ENCODE measurements at regions of chr2 and their contacts with region 1.

Region 1: DNA sequence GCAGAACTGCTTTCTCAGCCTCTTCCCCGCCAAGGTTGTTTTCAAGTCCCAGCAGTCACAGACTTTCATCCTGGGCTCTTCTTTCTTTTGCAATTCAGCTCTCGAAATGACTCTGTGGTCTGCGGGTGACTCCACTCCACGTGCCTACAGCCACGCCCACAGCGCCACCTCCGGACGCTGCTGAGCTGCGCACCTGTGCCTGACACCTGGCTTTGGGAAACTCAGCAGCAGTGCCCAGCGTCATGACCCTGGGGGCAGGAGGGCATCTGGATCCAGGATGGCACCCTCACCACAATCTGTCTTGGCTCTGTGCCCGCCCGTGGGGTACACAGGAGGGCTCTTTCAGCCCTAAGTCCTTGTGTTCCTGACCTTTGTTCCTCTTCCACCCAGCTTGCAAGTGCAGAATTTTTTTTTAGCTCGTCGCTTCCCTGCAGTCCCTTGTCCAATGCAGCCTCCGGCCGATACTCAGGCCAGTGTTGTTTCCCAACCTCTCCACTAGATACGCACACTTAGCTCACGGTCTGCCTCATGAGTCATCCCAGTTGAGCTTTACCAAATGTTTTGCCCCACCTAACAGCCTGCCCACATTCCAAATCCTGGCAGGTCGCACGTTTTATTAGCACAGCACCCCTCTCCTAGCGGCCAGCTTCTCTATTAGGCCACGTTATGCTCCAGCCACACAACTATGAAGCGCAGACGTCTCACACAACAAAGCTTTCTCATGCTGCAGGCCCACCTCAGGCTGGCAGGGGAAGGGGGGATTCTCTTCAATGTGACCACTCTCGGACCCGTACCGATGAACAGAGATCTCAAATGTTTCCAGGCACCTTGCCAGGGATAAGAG is 6.5 kb upstream of the CAPN10 start:
- DNase-seq: peak; percentile 84
- H3K4me3 Mint-ChIP-seq: peak overlapping the region; percentile 59
- H3K27ac Mint-ChIP-seq: peak overlapping the region; percentile 91
- H3K4me1 Mint-ChIP-seq: peaks cover 45% of the 10 kb centered on the region
- H3K27me3 Mint-ChIP-seq: no peaks in the 10 kb centered on the region
- CTCF ChIP-seq: peak; percentile 73

Region 2: GRCh38 chr2:240348522-240348921 is 231.5 kb before region 1 on chr2:
- CTCF ChIA-PET with region 1: no interaction called
- intact Hi-C with region 1: no loop called
- DNase-seq: no peak
- H3K4me3 Mint-ChIP-seq: no peak overlapping the region
- H3K27ac Mint-ChIP-seq: no peak overlapping the region
- H3K4me1 Mint-ChIP-seq: no peaks in the 10 kb centered on the region
- H3K27me3 Mint-ChIP-seq: peaks cover 40% of the 10 kb centered on the region
- CTCF ChIP-seq: no peak

Region 3: DNA sequence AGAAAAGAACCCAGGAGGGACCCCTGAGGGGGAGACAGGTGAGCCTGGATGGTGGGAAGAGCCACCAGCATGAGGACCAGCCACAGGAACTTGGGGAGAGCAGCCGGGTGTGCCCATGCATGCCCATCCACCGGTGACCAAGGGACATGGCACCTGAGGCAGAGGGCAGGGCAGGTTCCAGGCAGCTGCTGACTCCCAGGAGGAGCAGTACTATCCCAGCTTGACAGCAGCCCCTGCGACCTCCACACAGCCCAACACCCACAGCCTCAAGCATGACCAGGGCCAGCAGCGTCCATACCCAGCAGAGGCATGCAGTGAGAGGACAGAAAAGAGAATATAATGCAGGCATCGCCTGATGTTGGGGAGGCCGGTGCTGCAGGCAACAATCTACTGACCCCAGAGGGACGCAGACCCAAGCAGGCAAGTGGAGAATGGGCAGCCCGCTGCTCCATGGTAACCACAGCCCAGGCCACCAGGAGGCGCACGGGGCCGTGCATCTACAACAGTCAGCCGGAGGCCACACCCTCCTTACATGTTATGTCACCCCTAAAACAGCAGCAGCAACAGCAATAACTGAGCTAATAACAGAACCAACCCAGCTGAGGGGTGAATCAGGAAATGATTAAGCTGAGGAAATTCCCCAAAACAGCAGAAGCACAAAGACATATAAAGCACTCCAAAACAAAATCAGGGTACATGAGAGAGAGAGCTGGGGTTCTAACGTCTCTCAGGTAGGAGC is 66.3 kb before region 1 on chr2:
- CTCF ChIA-PET with region 1: interaction called, 14 read pairs
- intact Hi-C with region 1: no loop called
- DNase-seq: peak; percentile 90
- H3K4me3 Mint-ChIP-seq: no peak overlapping the region
- H3K27ac Mint-ChIP-seq: peak overlapping the region; percentile 20
- H3K4me1 Mint-ChIP-seq: peaks cover 12% of the 10 kb centered on the region
- H3K27me3 Mint-ChIP-seq: no peaks in the 10 kb centered on the region
- CTCF ChIP-seq: peak; percentile 91

Region 4: GRCh38 chr2:240556553-240557100 is 23.4 kb before region 1 on chr2:
- CTCF ChIA-PET with region 1: interaction called, 10 read pairs
- intact Hi-C with region 1: no loop called
- DNase-seq: peak; percentile 84
- H3K4me3 Mint-ChIP-seq: peak overlapping the region; percentile 93
- H3K27ac Mint-ChIP-seq: peak overlapping the region; percentile 30
- H3K4me1 Mint-ChIP-seq: peaks cover 26% of the 10 kb centered on the region
- H3K27me3 Mint-ChIP-seq: no peaks in the 10 kb centered on the region
- CTCF ChIP-seq: peak; percentile 74

Region 5: GRCh38 chr2:240566203-240567136 is 13.5 kb before region 1 on chr2:
- CTCF ChIA-PET with region 1: interaction called, 38 read pairs
- intact Hi-C with region 1: no loop called
- DNase-seq: peak; percentile 97
- H3K4me3 Mint-ChIP-seq: peak overlapping the region; percentile 85
- H3K27ac Mint-ChIP-seq: peak overlapping the region; percentile 97
- H3K4me1 Mint-ChIP-seq: peaks cover 41% of the 10 kb centered on the region
- H3K27me3 Mint-ChIP-seq: no peaks in the 10 kb centered on the region
- CTCF ChIP-seq: peak; percentile 95

Region 6: GRCh38 chr2:240604291-240604938 is 24.4 kb after region 1 on chr2:
- CTCF ChIA-PET with region 1: interaction called, 10 read pairs
- intact Hi-C with region 1: no loop called
- DNase-seq: peak; percentile 94
- H3K4me3 Mint-ChIP-seq: peak overlapping the region; percentile 70
- H3K27ac Mint-ChIP-seq: peak overlapping the region; percentile 75
- H3K4me1 Mint-ChIP-seq: peaks cover 45% of the 10 kb centered on the region
- H3K27me3 Mint-ChIP-seq: no peaks in the 10 kb centered on the region
- CTCF ChIP-seq: peak; percentile 80

Measured in Calu3 (cell line).